ENCODE measurements at regions of chr15 and their contacts with region 1.

Region 1: DNA sequence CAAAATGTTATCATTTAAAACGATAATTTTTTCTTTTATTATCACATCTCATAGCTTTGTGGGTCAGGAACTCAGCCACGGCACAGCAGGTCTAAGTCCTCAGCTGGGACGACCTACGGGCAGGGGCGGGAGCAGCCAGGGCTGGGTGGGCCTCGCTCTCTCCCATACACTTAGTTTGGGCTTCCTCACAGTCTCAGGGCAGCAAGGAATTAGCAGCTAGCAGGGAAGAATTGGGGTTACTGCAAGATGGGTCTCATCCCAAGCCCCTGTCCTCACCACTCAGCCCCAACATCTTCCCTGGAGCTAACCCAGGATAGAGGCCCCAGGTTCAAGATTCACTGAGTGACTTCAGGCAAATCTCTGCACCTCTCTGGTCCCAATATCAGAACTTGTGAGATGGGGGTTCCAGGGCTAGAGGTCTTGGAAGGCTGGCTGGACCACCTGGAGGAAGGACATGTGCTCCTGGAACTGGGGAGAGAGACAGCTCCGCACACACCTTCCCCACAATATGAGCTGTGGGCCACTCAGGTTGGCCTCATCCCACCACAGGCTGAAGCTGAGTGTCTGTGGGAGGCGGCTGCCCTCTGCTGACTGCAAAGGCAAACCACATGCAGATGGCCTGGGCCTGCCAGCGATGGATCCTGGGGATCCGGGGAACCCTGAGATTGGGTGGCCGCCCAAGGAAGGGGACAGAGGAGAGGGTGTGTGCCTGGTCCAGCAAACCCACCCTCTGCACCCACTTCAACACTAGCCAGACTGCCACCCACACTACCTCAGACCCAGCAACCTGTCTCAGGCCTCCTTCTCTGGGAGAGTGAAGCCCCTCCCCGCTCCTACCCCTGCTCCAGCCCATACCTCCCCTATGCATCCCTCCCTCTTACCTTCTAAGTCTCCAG is 45.0 kb downstream of the CYP11A1 start:
- H3K4me3 ChIP-seq: no peak overlapping the region
- H3K27ac ChIP-seq: no peak overlapping the region
- H3K4me1 ChIP-seq: peaks cover 7% of the 10 kb centered on the region
- CTCF ChIP-seq: peak; percentile 96

Region 2: DNA sequence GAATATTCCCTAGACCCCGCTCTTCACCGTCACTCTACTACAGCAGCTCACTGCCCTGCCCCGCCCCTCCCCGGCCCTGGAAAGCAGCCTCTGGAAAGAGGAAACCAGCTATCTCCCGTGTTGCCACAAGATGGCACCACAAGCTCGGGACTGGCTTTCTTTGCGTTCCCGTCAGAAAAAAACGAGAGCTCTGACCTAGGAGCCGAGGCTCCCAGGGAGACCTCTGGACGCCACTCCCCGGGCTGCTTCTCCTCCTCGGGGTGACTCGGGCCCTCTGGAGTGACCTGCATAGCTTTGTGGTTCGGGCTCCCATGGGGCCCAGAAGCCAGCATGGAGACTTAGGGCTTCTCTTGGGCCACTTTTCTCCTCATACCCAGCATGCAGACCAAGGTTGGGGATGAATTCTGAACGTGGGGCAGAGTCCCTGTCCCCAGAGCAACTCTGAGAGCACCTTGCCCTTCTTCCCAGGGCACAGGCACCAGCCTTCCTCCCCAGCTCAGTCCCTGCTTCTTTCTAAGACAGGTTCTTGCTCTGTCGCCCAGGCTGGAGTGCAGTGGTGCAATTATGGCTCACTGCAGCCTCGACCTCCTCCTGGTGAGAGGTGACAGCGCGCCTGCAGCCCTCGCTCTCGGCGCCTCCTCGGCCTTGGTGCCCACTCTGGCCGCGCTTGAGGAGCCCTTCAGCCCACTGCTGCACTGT is 349.3 kb before region 1 on chr15:
- CTCF ChIA-PET with region 1: interaction called, 108 read pairs
- POLR2A ChIA-PET with region 1: no interaction called
- H3K4me3 ChIP-seq: no peak overlapping the region
- H3K27ac ChIP-seq: no peak overlapping the region
- H3K4me1 ChIP-seq: no peaks in the 10 kb centered on the region; the same call in 1 of the 2 replicates
- CTCF ChIP-seq: peak; percentile 95

Region 3: GRCh38 chr15:74053941-74054529 is 268.4 kb before region 1 on chr15:
- CTCF ChIA-PET with region 1: interaction called, 301 read pairs
- POLR2A ChIA-PET with region 1: interaction called, 3 read pairs
- H3K4me3 ChIP-seq: no peak overlapping the region
- H3K27ac ChIP-seq: no peak overlapping the region
- H3K4me1 ChIP-seq: no peaks in the 10 kb centered on the region
- CTCF ChIP-seq: no peak

Region 4: GRCh38 chr15:74127260-74127953 is 195.0 kb before region 1 on chr15:
- CTCF ChIA-PET with region 1: interaction called, 75 read pairs
- POLR2A ChIA-PET with region 1: interaction called, 4 read pairs
- H3K4me3 ChIP-seq: peak overlapping the region; percentile 25
- H3K27ac ChIP-seq: peak overlapping the region; percentile 1; the same call in 1 of the 2 replicates
- H3K4me1 ChIP-seq: peaks cover 14% of the 10 kb centered on the region
- CTCF ChIP-seq: peak; percentile 100

Region 5: GRCh38 chr15:74302821-74303359 is 19.5 kb before region 1 on chr15:
- CTCF ChIA-PET with region 1: interaction called, 253 read pairs
- POLR2A ChIA-PET with region 1: interaction called, 4 read pairs
- H3K4me3 ChIP-seq: no peak overlapping the region
- H3K27ac ChIP-seq: no peak overlapping the region
- H3K4me1 ChIP-seq: no peaks in the 10 kb centered on the region; the same call in 1 of the 2 replicates
- CTCF ChIP-seq: peak; percentile 87